ENCODE measurements at regions of chr1 and their contacts with region 1.

Region 1: DNA sequence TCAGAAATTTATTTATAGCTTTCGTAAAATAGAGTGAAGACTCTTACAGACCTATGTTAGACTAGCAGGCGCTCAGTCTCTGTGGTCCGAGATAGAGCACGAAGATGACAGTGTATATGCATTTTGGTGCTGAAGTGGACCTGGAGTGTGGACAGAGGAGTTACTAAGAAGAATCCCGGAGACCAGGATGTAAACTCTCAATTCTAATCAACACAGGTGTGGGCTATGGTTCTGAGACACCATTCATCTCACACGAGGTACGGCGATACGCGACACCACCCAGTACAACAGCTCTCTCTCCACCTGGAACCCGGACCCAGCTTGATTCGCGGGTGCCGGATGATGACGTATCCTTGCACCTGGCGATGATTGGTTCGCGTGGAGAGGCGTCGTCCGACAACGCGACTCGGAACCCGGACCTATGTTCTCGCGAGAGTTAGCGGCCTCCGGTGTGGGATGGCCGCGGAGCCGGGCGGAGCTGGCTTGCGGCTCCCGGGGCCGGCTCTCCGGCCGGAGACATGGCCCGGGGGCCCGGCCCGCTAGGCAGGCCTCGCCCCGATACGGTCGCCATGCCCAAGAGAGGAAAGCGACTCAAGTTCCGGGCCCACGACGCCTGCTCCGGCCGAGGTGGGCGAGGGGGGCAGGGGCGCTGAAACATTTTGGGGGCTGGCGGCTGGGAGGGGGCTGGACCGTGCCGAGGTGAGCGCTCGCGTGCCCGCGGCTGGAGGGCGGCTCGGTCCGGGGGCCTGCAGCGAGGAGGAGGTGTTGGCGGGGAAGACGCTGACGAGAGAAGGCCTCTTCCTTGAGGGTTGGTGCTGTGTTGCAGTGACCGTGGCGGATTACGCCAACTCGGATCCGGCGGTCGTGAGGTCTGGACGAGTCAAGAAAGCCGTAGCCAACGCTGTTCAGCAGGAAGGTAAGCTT is at the start of gene TMEM183A:
- DNase-seq: peak; percentile 90 to 95
- H3K4me3 ChIP-seq: peak within 1 kb of the TSS; percentile 81 to 99 (median 97)
- H3K27ac ChIP-seq: peak within 1 kb of the TSS; percentile 97
- H3K4me1 ChIP-seq: peaks cover 0 to 4% (median 1%) of the 10 kb centered on the region in 4 experiments; a peak in 3 of 7 replicates
- H3K27me3 ChIP-seq: no peaks in the 10 kb centered on the region
- CTCF ChIP-seq: no peak
- EP300 ChIP-seq: no peak
- POLR2A ChIP-seq: peak; percentile 98 to 99
- RAD21 ChIP-seq: no peak
- total RNA-seq, gene TMEM183A: 107 TPM in 2 replicates

Region 2: DNA sequence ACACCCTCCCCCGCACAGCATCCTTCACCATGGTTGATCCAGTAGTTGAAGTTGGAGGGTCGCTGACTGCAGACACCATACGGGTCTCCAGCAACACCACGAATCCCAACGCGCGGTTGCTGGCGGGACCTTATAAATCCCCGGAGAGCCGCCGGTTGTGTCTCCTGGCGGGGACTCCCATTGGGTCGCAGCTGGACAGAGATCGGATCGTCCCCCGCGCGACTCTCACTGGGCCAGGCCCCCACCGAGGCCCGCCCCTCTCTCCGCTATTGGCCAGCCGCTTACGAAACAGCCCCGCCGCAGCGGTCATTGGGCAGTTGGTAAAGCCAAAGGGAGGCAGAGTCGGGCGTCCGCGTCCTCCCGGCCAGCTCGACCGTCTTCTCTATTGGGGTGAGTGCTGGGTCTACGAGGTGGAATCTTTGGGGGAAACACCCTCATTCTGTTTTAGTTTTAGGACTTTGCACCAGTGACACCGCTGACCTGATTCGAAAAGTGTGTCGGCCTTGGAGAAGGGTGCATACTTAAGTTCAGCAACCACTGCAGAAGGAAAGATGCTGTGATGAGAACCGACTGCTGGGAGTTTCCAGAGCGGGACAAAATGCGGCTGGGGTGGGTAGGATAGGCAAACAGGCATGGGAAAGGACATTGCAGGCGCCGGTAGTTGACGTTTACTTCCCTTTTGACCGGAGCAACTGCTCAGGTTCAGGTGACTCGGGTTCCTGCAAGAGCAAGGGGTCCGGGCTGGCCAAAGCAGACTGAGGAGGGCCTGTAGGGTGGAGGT is 145.6 kb before region 1 on chr1:
- CTCF ChIA-PET with region 1: no interaction called
- POLR2A ChIA-PET with region 1: interaction called, 20 read pairs
- DNase-seq: peak; percentile 78 to 92
- H3K4me3 ChIP-seq: peak overlapping the region; percentile 81 to 92 (median 88)
- H3K27ac ChIP-seq: peak overlapping the region; percentile 91; the same call in 1 of the 2 replicates
- H3K4me1 ChIP-seq: peaks cover 0 to 8% (median 3%) of the 10 kb centered on the region in 4 experiments; a peak in 3 of 7 replicates
- H3K27me3 ChIP-seq: no peaks in the 10 kb centered on the region
- CTCF ChIP-seq: no peak
- EP300 ChIP-seq: no peak
- POLR2A ChIP-seq: peak in 1 of 2 experiments; percentile 74; a peak in 2 of 3 replicates
- RAD21 ChIP-seq: no peak; a peak in 1 of 4 replicates

Region 3: GRCh38 chr1:202888531-202889360 is 118.5 kb before region 1 on chr1 and contains the start of gene RABIF:
- CTCF ChIA-PET with region 1: no interaction called
- POLR2A ChIA-PET with region 1: interaction called, 11 read pairs
- DNase-seq: peak; percentile 85 to 92
- H3K4me3 ChIP-seq: peak within 1 kb of the TSS; percentile 65 to 96 (median 81)
- H3K27ac ChIP-seq: peak within 1 kb of the TSS; percentile 28; the same call in 1 of the 2 replicates
- H3K4me1 ChIP-seq: peaks cover 0 to 7% (median 4%) of the 10 kb centered on the region in 4 experiments; a peak in 5 of 7 replicates
- H3K27me3 ChIP-seq: no peaks in the 10 kb centered on the region
- CTCF ChIP-seq: peak in 1 of 3 experiments; percentile 16; a peak in 2 of 4 replicates
- EP300 ChIP-seq: no peak
- POLR2A ChIP-seq: peak; percentile 52 to 90
- RAD21 ChIP-seq: no peak; a peak in 1 of 4 replicates
- total RNA-seq, gene RABIF: 5.6 and 6.5 TPM in 2 replicates

Region 4: GRCh38 chr1:202926720-202927491 is 80.3 kb before region 1 on chr1 and contains the start of gene KLHL12:
- CTCF ChIA-PET with region 1: interaction called, 3 read pairs
- POLR2A ChIA-PET with region 1: interaction called, 18 read pairs
- DNase-seq: peak; percentile 93 to 96
- H3K4me3 ChIP-seq: peak within 1 kb of the TSS; percentile 52 to 90 (median 87)
- H3K27ac ChIP-seq: peak within 1 kb of the TSS; percentile 90
- H3K4me1 ChIP-seq: no peaks in the 10 kb centered on the region
- H3K27me3 ChIP-seq: no peaks in the 10 kb centered on the region
- CTCF ChIP-seq: peak; percentile 69 to 78 (median 69)
- EP300 ChIP-seq: peak; percentile 44 to 59; a peak in 2 of 3 replicates
- POLR2A ChIP-seq: peak; percentile 82 to 94
- RAD21 ChIP-seq: peak; percentile 41 to 52
- total RNA-seq, gene KLHL12: 29.9 and 33.3 TPM in 2 replicates

Region 5: GRCh38 chr1:202987922-202988583 is 19.2 kb before region 1 on chr1:
- CTCF ChIA-PET with region 1: interaction called, 43 read pairs
- POLR2A ChIA-PET with region 1: interaction called, 13 read pairs
- DNase-seq: no peak
- H3K4me3 ChIP-seq: no peak overlapping the region
- H3K27ac ChIP-seq: no peak overlapping the region
- H3K4me1 ChIP-seq: no peaks in the 10 kb centered on the region
- H3K27me3 ChIP-seq: no peaks in the 10 kb centered on the region
- CTCF ChIP-seq: no peak
- EP300 ChIP-seq: no peak
- POLR2A ChIP-seq: no peak
- RAD21 ChIP-seq: no peak

Region 6: GRCh38 chr1:203026031-203026989 is 19.1 kb after region 1 on chr1 and contains the start of gene PPFIA4:
- CTCF ChIA-PET with region 1: interaction called, 12 read pairs
- POLR2A ChIA-PET with region 1: interaction called, 72 read pairs
- DNase-seq: peak; percentile 73 to 97
- H3K4me3 ChIP-seq: peak within 1 kb of the TSS; percentile 51 to 88 (median 87)
- H3K27ac ChIP-seq: no peak within 1 kb of the TSS
- H3K4me1 ChIP-seq: peaks cover 4 to 13% (median 6%) of the 10 kb centered on the region in 4 experiments
- H3K27me3 ChIP-seq: peaks cover 7 to 26% (median 18%) of the 10 kb centered on the region in 4 experiments
- CTCF ChIP-seq: peak in 1 of 3 experiments; percentile 28; a peak in 1 of 4 replicates
- EP300 ChIP-seq: 0 out of 3 replicates have a peak, but pooled peaks of 1 of the 2 experiments have one; percentile 26
- POLR2A ChIP-seq: peak; percentile 74 to 79
- RAD21 ChIP-seq: peak in 1 of 2 experiments; percentile 11; a peak in 1 of 4 replicates
- total RNA-seq, gene PPFIA4: 7.0 and 9.9 TPM in 2 replicates

Region 7: DNA sequence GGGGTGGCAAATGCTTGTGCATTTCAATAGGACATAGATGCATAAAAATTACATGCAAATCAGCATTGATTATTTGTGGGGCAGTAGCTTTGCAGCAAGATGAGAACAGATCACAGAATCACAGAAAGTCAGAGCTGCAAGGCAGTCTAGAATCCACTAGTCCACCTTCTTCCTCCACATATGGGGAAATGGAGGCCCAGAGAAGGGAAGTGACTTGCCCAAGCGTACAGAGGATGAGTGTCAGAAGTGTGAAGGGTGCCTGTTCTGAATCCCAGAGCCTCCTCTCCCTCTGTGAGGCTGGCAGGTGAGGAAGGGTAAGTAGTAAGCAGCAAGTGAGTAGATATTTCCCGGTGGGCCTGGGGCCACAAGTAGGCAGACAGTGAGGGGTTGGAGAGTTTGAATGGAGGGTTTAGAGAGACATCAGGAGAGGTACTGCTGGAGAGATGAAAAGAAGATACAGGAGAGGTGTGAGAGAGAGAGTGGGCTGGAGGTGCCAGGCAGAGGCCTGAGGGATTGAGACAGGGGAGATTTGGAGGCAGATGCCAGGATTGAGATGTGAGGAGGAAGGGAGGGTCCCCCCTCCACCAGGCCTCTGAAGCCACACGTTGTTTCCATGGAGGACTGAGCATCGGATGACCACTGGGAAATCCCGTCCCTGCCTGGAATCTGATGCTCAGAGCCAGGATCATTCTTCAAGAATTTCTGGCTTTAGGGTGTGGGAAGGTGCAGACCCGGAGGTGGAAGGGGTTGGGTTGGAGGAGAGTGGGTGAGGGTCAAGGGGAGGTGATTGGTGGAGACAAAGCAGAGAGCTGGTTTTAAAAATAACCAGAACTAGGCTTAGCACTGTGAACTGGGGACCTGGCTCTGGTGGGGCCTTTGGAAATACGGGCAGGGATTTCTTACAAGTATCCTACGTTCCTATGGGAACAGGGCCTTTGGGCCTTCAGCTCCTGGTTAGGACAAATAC is 83.5 kb after region 1 on chr1:
- CTCF ChIA-PET with region 1: no interaction called
- POLR2A ChIA-PET with region 1: no interaction called
- DNase-seq: peak in 1 of 2 experiments; percentile 40
- H3K4me3 ChIP-seq: no peak overlapping the region
- H3K27ac ChIP-seq: no peak overlapping the region
- H3K4me1 ChIP-seq: peaks cover 0 to 3% (median 0%) of the 10 kb centered on the region in 4 experiments; a peak in 1 of 7 replicates
- H3K27me3 ChIP-seq: 0 out of 7 replicates have a peak, but pooled peaks cover 0 to 2% (median 0%) of the 10 kb centered on the region in 4 experiments
- CTCF ChIP-seq: no peak
- EP300 ChIP-seq: no peak
- POLR2A ChIP-seq: no peak
- RAD21 ChIP-seq: no peak

Measured in H1 (cell line).